ENCODE measurements at regions of chr4 and their contacts with region 1.

Region 1: GRCh38 chr4:108650212-108651013 is at the start of gene OSTC:
- DNase-seq: peak; percentile 95
- ATAC-seq: peak; percentile 96
- H3K4me3 Mint-ChIP-seq: peak within 1 kb of the TSS; percentile 98
- H3K27ac Mint-ChIP-seq: peak within 1 kb of the TSS; percentile 93
- H3K4me1 Mint-ChIP-seq: peaks cover 32% of the 10 kb centered on the region
- H3K27me3 Mint-ChIP-seq: no peaks in the 10 kb centered on the region
- total RNA-seq, gene OSTC: 50.5 to 78.5 TPM

Region 2: GRCh38 chr4:108637856-108638255 is 12.6 kb before region 1 on chr4:
- CTCF ChIA-PET with region 1: interaction called, 12 read pairs
- POLR2A ChIA-PET with region 1: no interaction called
- intact Hi-C with region 1: no loop called
- DNase-seq: no peak
- ATAC-seq: no peak
- H3K4me3 Mint-ChIP-seq: no peak overlapping the region
- H3K27ac Mint-ChIP-seq: no peak overlapping the region
- H3K4me1 Mint-ChIP-seq: no peaks in the 10 kb centered on the region
- H3K27me3 Mint-ChIP-seq: no peaks in the 10 kb centered on the region

Region 3: GRCh38 chr4:109729718-109730618 is 1079.6 kb after region 1 on chr4 and contains the start of gene PLA2G12A:
- CTCF ChIA-PET with region 1: no interaction called
- POLR2A ChIA-PET with region 1: no interaction called
- intact Hi-C with region 1: loop called in 1 of 2 experiments (anchors 10 kb)
- DNase-seq: peak; percentile 85
- ATAC-seq: peak; percentile 87
- H3K4me3 Mint-ChIP-seq: peak within 1 kb of the TSS; percentile 84
- H3K27ac Mint-ChIP-seq: peak within 1 kb of the TSS; percentile 71
- H3K4me1 Mint-ChIP-seq: peaks cover 14% of the 10 kb centered on the region
- H3K27me3 Mint-ChIP-seq: no peaks in the 10 kb centered on the region
- total RNA-seq, gene PLA2G12A: 17.9 to 31.1 TPM